ENCODE measurements at regions of chr6 and their contacts with region 1.

Region 1: DNA sequence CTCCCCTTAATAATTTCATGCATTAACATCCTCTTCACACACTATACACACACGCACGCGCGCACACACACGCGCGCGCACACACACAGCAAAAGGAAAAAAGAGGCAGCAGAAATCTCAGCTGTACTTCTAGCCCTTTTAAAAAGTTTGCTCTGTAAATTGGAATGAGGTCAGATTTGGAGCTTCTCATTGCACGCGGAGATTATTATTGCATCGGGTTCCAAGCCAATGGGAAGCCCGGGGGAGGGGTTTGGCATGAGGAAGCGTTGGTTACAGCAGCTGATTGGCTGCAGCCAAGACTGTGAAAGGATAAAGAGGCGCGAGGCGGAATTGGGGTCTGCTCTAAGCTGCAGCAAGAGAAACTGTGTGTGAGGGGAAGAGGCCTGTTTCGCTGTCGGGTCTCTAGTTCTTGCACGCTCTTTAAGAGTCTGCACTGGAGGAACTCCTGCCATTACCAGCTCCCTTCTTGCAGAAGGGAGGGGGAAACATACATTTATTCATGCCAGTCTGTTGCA is at the start of gene SOX4:
- DNase-seq: peak; percentile 86 to 94
- ATAC-seq: peak; percentile 70 to 83
- H3K4me3 ChIP-seq: peak within 1 kb of the TSS; percentile 83
- H3K27ac ChIP-seq: peak within 1 kb of the TSS; percentile 96 to 97
- H3K4me1 ChIP-seq: peaks cover 16% of the 10 kb centered on the region; the same call in 2 of the 3 replicates
- CTCF ChIP-seq: no peak
- EP300 ChIP-seq: no peak
- POLR2A ChIP-seq: peak; percentile 98
- RAD21 ChIP-seq: no peak
- polyA plus RNA-seq, gene SOX4: 26.0 and 26.2 TPM in 2 replicates

Region 2: DNA sequence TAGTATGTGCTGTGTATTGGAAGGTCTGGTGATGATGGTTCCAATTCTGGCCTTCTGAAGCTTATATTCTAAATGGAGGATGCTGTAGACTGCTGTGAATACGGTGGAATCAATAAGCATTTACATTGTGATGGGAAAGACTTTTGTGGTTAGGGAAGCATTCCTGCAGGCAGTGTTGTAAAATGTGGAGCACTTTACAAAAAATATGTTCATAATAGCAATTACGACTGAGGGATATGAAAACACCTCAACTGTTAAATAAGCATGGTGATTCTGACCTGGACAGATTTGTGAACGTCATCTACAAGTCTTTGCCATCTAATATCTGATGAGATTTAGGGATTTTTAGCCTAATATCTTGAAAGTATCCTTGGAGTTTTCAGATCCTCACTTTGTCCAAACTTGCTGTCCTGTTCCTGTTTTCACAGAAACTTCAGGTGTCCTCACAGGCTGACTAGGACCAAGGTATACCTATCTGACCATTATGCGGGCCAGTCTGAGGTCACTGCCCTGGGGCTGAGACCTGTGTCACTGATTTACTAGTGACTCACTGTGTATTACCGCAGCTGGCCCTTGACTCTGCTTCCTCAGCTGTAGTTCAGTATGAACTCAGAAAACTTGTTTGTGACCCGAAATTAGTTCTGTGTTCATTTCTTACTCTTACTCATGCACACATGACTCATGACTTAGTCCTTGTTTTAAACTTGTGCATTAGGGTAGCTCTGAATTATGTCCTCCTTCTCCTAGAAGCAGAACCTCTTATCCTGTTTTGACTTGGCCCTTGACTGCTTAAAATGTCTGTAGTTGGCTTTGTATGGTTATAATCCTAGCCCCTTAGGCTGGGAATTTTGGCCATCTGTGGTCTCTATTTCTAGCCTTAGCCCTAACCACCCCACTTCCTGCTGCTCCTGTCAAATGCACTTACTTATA is 716.2 kb before region 1 on chr6:
- CTCF ChIA-PET with region 1: interaction called, 27 read pairs
- POLR2A ChIA-PET with region 1: interaction called, 20 read pairs
- DNase-seq: peak; percentile 49 to 83
- ATAC-seq: peak; percentile 98 to 99
- H3K4me3 ChIP-seq: no peak overlapping the region
- H3K27ac ChIP-seq: peak overlapping the region; percentile 88 to 89
- H3K4me1 ChIP-seq: peaks cover 36% of the 10 kb centered on the region
- CTCF ChIP-seq: no peak
- EP300 ChIP-seq: peak; percentile 46 to 67; a peak in 2 of 5 replicates
- POLR2A ChIP-seq: no peak
- RAD21 ChIP-seq: peak in 1 of 2 experiments; percentile 60; a peak in 4 of 5 replicates

Region 3: GRCh38 chr6:21501021-21501354 is 92.5 kb before region 1 on chr6:
- CTCF ChIA-PET with region 1: no interaction called
- POLR2A ChIA-PET with region 1: no interaction called
- DNase-seq: no peak
- ATAC-seq: no peak
- H3K4me3 ChIP-seq: no peak overlapping the region
- H3K27ac ChIP-seq: no peak overlapping the region
- H3K4me1 ChIP-seq: no peaks in the 10 kb centered on the region
- CTCF ChIP-seq: no peak
- EP300 ChIP-seq: no peak
- POLR2A ChIP-seq: no peak
- RAD21 ChIP-seq: no peak

Region 4: DNA sequence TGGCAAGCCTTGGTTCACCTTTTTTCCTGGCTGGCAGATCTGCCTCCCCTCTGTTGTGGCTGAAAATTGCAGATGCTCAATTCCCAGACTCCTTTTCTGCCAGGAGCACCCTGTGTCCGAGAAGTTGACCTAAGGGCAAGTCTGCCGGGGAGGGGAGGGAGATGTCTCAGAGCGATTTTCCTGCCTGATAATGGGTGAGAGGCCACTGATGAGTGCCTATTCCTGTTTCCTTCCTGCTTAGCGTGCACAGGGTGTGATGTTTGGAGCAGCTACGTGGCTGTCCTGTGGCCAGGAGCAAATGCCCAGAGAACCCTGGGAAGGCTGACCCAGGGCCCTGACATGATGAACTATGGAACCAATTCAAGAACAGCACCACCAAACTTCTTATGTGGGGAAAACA is 22.5 kb after region 1 on chr6:
- CTCF ChIA-PET with region 1: no interaction called
- POLR2A ChIA-PET with region 1: no interaction called
- DNase-seq: no peak
- ATAC-seq: no peak
- H3K4me3 ChIP-seq: no peak overlapping the region
- H3K27ac ChIP-seq: 0 out of 6 replicates have a peak overlapping the region, but pooled peaks of 1 of the 2 experiments have one; percentile 41
- H3K4me1 ChIP-seq: no peaks in the 10 kb centered on the region; the same call in 2 of the 3 replicates
- CTCF ChIP-seq: no peak
- EP300 ChIP-seq: no peak
- POLR2A ChIP-seq: no peak
- RAD21 ChIP-seq: no peak

Region 5: DNA sequence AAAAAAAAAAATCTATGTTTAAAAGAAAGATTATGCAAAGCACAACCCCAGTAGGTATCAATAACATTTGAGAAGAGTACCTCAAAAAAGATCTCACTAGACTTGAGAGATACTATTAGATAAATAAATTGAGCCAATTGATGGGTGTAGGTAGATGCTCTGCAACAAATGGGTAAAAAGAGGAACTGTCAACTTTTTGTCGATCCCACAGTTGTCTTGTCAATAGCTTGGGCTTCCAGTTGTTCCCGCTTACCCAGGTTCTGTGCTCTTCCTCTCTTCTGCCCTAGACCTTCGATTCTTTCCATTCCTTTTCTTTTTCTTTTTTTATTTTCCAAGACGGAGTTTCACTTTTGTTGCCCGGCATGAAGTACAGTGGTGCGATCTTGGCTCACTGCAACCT is 227.0 kb after region 1 on chr6:
- CTCF ChIA-PET with region 1: no interaction called
- POLR2A ChIA-PET with region 1: interaction called, 10 read pairs
- DNase-seq: no peak
- ATAC-seq: no peak
- H3K4me3 ChIP-seq: no peak overlapping the region
- H3K27ac ChIP-seq: no peak overlapping the region
- H3K4me1 ChIP-seq: peaks cover 19% of the 10 kb centered on the region
- CTCF ChIP-seq: no peak
- EP300 ChIP-seq: no peak
- POLR2A ChIP-seq: no peak
- RAD21 ChIP-seq: no peak

Region 6: GRCh38 chr6:22113026-22113766 is 519.7 kb after region 1 on chr6:
- CTCF ChIA-PET with region 1: interaction called, 5 read pairs
- POLR2A ChIA-PET with region 1: interaction called, 39 read pairs
- DNase-seq: peak; percentile 55 to 97
- ATAC-seq: peak; percentile 97 to 99
- H3K4me3 ChIP-seq: peak overlapping the region; percentile 5; the same call in 1 of the 3 replicates
- H3K27ac ChIP-seq: peak overlapping the region; percentile 88 to 98
- H3K4me1 ChIP-seq: peaks cover 50% of the 10 kb centered on the region
- CTCF ChIP-seq: no peak
- EP300 ChIP-seq: peak; percentile 98 to 99
- POLR2A ChIP-seq: no peak
- RAD21 ChIP-seq: peak; percentile 30 to 82

Region 7: DNA sequence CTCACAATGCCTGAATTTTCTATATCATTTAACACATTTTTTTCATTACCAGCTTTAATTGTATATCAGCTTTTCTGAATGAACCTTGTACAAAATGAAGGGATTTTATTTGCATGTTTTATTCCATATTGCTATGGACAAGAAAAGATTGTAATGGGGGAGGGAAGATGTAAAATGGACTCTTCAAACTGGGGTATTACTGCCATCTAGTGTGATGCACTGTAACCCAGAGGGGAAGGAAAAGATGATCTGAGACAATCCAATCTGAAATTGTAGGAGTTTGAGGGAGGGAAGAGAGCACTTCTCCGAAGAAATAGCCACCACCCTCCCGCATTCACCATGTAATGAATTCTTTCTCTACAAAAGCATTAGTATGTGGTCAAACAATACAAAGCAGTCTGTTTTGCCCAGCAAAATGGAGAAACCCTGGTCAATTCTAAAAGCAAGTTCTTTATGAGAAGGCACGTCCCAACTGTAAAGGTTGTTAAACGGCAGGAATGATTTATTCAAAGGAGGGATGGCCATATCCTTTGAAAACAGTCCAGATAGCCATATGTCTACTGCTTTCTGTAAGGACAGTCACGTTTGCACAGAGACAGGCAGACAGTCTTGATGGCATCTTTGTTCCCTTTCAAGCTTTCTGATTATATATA is 1853.1 kb after region 1 on chr6:
- CTCF ChIA-PET with region 1: no interaction called
- POLR2A ChIA-PET with region 1: interaction called, 15 read pairs
- DNase-seq: peak; percentile 2 to 9
- ATAC-seq: no peak
- H3K4me3 ChIP-seq: no peak overlapping the region
- H3K27ac ChIP-seq: no peak overlapping the region
- H3K4me1 ChIP-seq: no peaks in the 10 kb centered on the region
- CTCF ChIP-seq: peak; percentile 41; the same call in 2 of the 3 replicates
- EP300 ChIP-seq: no peak
- POLR2A ChIP-seq: no peak
- RAD21 ChIP-seq: peak; percentile 44 to 63

Measured in A549 (cell line).